ENCODE measurements at regions of chr1 and their contacts with region 1.

Region 1: GRCh38 chr1:55071477-55071876 is 32.1 kb downstream of the PCSK9 start:
- DNase-seq: no peak
- H3K4me3 Mint-ChIP-seq: no peak overlapping the region
- H3K27ac Mint-ChIP-seq: peak overlapping the region; percentile 55
- H3K4me1 Mint-ChIP-seq: peaks cover 29% of the 10 kb centered on the region
- H3K27me3 Mint-ChIP-seq: no peaks in the 10 kb centered on the region

Region 2: GRCh38 chr1:55060133-55060999 is 11.1 kb before region 1 on chr1:
- CTCF ChIA-PET with region 1: interaction called, 13 read pairs
- POLR2A ChIA-PET with region 1: no interaction called
- DNase-seq: no peak
- H3K4me3 Mint-ChIP-seq: no peak overlapping the region
- H3K27ac Mint-ChIP-seq: no peak overlapping the region
- H3K4me1 Mint-ChIP-seq: peaks cover 2% of the 10 kb centered on the region
- H3K27me3 Mint-ChIP-seq: no peaks in the 10 kb centered on the region

Region 3: DNA sequence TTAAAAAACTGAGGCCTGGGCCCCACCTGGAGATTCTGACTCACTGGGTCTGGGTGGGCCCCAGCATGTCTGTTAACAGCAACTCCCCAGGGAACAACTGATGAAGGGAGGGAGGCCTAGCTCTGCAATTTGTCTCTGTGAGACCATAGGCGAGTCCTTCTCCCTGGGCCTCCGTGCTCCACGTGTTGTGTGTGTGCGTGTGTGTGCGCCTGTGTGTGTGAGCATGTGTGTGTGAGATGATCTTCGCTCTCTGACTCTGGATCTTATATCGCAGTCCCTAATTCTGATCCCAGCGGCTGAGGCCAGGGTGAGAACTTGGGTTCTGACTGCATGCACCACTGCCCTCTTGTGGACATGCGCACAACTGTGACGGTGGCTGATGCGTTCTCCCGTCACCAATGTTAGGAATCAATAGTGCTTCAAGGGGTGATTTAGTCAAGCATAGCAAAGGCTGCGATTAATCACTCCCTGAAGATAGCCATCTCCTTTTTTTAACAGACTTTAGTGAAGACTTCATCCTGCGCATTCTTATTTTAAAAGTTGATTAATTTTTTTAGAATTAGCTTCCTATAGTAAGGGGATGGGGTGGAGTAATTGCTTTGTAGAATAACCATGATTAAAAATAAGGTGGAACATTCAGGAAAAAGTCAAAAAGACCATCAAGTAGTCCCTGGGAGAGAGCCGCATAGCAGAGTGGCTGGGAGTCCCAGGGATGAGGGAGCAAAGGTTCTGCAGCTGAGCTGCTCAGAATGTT is 206.1 kb after region 1 on chr1:
- CTCF ChIA-PET with region 1: interaction called, 12 read pairs
- POLR2A ChIA-PET with region 1: no interaction called
- DNase-seq: peak; percentile 84
- H3K4me3 Mint-ChIP-seq: no peak overlapping the region
- H3K27ac Mint-ChIP-seq: no peak overlapping the region
- H3K4me1 Mint-ChIP-seq: peaks cover 21% of the 10 kb centered on the region
- H3K27me3 Mint-ChIP-seq: peaks cover 7% of the 10 kb centered on the region

Measured in activated CD4-positive, alpha-beta memory T cell treated with anti-CD3 and anti-CD28 coated beads, Interleukin-2, amount 10 ng/mL, durations not matched to agents 7 days and 5 days (primary cell).